GM10248 (cell line): ENCODE measurements at regions of chr20 and their contacts with region 1.

Region 1: DNA sequence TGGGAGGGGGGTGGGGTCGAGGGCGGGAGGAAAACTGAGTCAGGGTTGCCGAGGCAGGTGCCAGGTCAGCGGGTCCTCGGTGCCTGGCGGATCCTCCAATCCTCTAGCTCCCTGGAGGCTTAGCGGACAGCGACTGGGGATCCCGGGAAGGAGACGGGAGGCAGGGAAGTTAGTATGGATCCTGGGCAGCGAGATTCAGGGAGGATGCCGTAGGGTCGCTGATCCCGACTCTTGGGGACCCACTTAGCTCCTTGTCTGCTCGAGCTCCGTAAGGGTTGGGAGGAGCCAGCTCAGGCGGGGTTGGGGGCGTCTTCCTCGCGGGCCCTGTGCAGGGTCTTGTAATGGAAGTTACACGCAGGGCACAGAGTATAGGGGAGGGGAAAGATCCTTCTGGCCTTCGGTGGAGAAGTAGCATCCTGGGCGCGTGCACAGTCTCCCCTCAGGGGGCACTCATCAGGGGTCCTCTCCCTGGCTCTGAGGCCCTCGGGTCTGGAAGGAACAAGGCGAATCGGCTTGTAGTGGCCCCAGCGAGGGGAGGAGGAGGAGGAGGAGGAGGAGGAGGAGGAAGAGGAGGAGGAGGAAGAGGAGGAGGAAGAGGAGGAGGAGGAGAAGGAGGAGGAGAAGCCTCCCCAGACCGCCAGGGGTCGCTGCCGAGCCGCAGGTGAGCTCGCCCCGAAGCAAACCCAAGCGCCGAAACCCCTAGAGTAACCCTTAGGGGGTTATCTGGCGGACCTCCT is 6.4 kb upstream of the SLC12A5 start:
- DNase-seq: peak; percentile 82
- CTCF ChIP-seq: peak; percentile 72

Region 2: DNA sequence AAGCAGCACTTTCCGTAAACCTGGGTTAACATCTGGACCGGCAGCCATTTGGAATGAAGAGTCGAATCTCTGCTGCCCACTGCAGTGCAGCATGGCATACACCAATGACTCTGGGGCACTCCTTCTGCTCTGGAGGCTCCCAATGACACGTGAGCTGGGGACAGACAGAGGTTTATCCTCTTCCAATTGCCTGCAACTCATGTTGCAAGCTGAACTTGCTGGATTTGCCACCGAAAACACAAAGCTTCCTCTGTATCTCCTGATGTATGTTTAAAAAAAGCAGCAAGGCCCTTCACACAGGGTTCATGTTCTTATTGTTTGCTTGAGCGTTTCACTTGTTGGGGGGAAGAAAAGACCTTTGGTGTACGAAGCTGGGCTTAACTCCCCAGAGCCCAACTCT is 56.4 kb after region 1 on chr20:
- CTCF ChIA-PET with region 1: interaction called, 15 read pairs
- POLR2A ChIA-PET with region 1: no interaction called
- DNase-seq: no peak
- CTCF ChIP-seq: no peak

Region 3: GRCh38 chr20:46089167-46089416 is 66.5 kb after region 1 on chr20:
- CTCF ChIA-PET with region 1: interaction called, 17 read pairs
- POLR2A ChIA-PET with region 1: no interaction called
- DNase-seq: no peak
- CTCF ChIP-seq: no peak

Region 4: GRCh38 chr20:46132705-46133120 is 110.1 kb after region 1 on chr20:
- CTCF ChIA-PET with region 1: interaction called, 10 read pairs
- POLR2A ChIA-PET with region 1: no interaction called
- DNase-seq: peak; percentile 83
- CTCF ChIP-seq: peak; percentile 90

Region 5: GRCh38 chr20:46406199-46406985 is 383.8 kb after region 1 on chr20 and contains the start of gene ELMO2:
- CTCF ChIA-PET with region 1: interaction called, 10 read pairs
- POLR2A ChIA-PET with region 1: no interaction called
- DNase-seq: peak; percentile 94
- CTCF ChIP-seq: no peak